ENCODE measurements at regions of chr11 and their contacts with region 1.

Region 1: DNA sequence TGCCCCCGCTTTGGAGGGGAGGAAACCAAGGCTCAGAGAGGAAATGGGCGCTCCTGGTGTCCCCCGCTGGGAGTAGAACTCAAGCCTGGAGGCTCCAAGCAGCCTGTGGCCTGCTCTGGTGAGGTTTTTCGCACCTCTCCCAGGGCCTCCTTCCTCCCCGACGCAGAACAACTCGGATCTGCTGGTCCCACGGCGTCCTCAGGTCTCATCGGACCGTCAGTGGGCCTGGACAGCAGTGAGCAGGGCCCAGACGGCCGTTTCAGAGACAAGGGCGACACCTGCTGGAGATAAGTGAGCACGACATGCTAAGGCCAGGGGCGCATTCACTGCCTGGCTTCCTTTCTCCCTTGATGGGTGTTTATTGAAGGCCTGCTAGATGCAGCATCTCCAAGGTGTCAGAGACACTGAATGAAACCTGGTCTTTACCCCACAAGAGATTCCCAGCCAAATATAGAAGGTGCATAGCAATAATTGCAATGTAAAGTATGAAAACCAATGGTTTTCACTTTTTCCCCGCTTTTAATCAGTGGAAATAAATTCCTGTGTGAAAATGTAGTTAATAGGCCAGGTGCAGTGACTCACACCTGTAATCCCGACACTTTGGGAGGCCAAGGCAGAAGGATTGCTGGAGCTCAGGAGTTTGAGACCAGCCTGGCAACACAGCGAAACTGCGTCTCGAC is 26.9 kb upstream of the CD82 start:
- DNase-seq: no peak
- H3K4me3 ChIP-seq: no peak overlapping the region
- CTCF ChIP-seq: peak; percentile 95

Region 2: GRCh38 chr11:44104481-44105294 is 433.8 kb before region 1 on chr11:
- CTCF ChIA-PET with region 1: interaction called, 50 read pairs
- POLR2A ChIA-PET with region 1: no interaction called
- DNase-seq: no peak
- H3K4me3 ChIP-seq: no peak overlapping the region
- CTCF ChIP-seq: no peak

Region 3: GRCh38 chr11:44133335-44133946 is 405.1 kb before region 1 on chr11:
- CTCF ChIA-PET with region 1: interaction called, 93 read pairs
- POLR2A ChIA-PET with region 1: no interaction called
- DNase-seq: no peak
- H3K4me3 ChIP-seq: no peak overlapping the region
- CTCF ChIP-seq: peak; percentile 54

Region 4: DNA sequence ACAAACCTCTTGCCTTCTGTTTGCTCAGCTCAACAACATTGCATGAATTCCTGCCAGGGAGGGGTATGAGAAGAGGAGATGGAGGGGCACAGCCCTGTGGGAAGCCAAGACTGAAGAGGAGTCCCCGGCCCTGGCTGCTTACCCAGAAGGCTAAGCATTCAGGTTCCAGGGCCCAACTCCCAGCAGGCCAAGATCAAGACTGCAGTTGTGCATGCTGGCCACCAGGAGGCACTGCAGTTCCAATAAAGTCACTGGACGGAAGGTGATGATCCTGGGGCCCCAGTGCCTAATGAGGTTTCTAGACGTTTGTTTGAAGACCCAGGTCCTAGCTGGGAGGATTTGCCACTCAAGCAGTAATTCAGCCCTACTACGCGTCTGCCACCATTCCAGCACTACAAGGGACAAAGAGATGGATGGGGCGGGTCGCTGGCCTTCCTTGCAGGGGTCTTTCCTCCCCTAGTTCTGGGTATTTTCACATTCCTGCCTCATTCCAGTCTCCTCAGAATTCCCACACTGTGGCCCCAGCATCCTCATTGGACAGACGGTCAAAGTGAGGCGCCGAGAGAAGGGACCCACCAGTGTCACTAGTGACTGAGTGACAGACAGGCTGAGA is 252.1 kb before region 1 on chr11:
- CTCF ChIA-PET with region 1: interaction called, 36 read pairs
- POLR2A ChIA-PET with region 1: no interaction called
- DNase-seq: no peak
- H3K4me3 ChIP-seq: no peak overlapping the region
- CTCF ChIP-seq: peak; percentile 88

Region 5: GRCh38 chr11:44731685-44732430 is 193.3 kb after region 1 on chr11:
- CTCF ChIA-PET with region 1: no interaction called
- POLR2A ChIA-PET with region 1: no interaction called
- DNase-seq: no peak
- H3K4me3 ChIP-seq: no peak overlapping the region
- CTCF ChIP-seq: no peak

Measured in AG04449 (cell line).